ENCODE measurements at regions of chr21 and their contacts with region 1.

Region 1: GRCh38 chr21:41777951-41778874 is 11.4 kb upstream of the RIPK4 start:
- DNase-seq: peak; percentile 83 to 86 (median 84)
- ATAC-seq: peak; percentile 91 to 97 (median 92)
- H3K4me3 ChIP-seq: no peak overlapping the region
- H3K27ac ChIP-seq: no peak overlapping the region
- H3K4me1 ChIP-seq: peaks cover 0 to 18% (median 3%) of the 10 kb centered on the region in 4 donors
- H3K27me3 ChIP-seq: no peaks in the 10 kb centered on the region
- CTCF ChIP-seq: peak; percentile 87 to 96 (median 92)
- POLR2A ChIP-seq: no peak

Region 2: GRCh38 chr21:41612674-41613532 is 165.3 kb before region 1 on chr21:
- intact Hi-C with region 1: loop called (anchors 5 to 10 kb)
- DNase-seq: peak in 2 of 3 donors; percentile 41 to 57
- ATAC-seq: peak; percentile 76 to 80 (median 78)
- H3K4me3 ChIP-seq: no peak overlapping the region
- H3K27ac ChIP-seq: no peak overlapping the region
- H3K4me1 ChIP-seq: peaks cover 0 to 4% (median 0%) of the 10 kb centered on the region in 4 donors
- H3K27me3 ChIP-seq: no peaks in the 10 kb centered on the region
- CTCF ChIP-seq: peak; percentile 67 to 76 (median 71)
- POLR2A ChIP-seq: no peak

Measured in right lobe of liver (tissue), 6 donors.